Left ventricle myocardium superior (tissue), 1 donor: ENCODE measurements at regions of chr21 and their contacts with region 1.

Region 1: GRCh38 chr21:27362249-27362648 is 395.4 kb upstream of the ADAMTS5 start:
- DNase-seq: no peak
- ATAC-seq: no peak

Region 2: GRCh38 chr21:26881504-26882228 is 480.6 kb before region 1 on chr21:
- intact Hi-C with region 1: no loop called
- DNase-seq: no peak
- ATAC-seq: no peak

Region 3: DNA sequence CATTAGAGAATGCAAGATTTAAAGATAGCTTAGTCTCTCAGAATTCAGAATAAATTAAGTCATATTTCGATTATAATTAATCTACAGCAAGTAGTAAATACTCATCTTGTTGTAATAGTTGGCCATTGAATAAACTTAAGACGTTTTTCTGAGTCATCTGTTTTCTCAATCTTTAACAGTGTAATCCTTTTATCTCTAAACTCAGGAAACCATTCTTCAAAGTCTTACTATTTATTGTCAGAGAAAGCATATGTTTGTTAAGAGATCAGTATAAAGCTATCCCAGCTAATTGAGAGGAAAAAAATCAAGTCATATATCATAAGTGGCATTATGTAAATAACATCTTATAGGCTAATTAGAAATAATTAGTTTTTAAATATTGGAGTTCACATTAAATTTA is 194.2 kb before region 1 on chr21:
- intact Hi-C with region 1: no loop called
- DNase-seq: no peak
- ATAC-seq: no peak

Region 4: GRCh38 chr21:27269646-27270045 is 92.6 kb before region 1 on chr21:
- intact Hi-C with region 1: no loop called
- DNase-seq: no peak
- ATAC-seq: peak; percentile 73

Region 5: GRCh38 chr21:27564684-27565301 is 202.5 kb after region 1 on chr21:
- intact Hi-C with region 1: loop called (anchors 10 kb)
- DNase-seq: peak; percentile 33
- ATAC-seq: peak; percentile 75